Left colon (tissue), 2 donors: ENCODE measurements at regions of chr1 and their contacts with region 1.

Region 1: GRCh38 chr1:25392841-25393240 is 27.8 kb downstream of the RHCE start:
- DNase-seq: peak in 1 of 2 donors; percentile 6
- ATAC-seq: peak; percentile 52

Region 2: GRCh38 chr1:25442178-25442577 is 49.3 kb after region 1 on chr1:
- intact Hi-C with region 1: loop called in 1 of 2 experiments (anchors 10 kb)
- DNase-seq: no peak
- ATAC-seq: no peak

Region 3: GRCh38 chr1:26279456-26280332 is 886.9 kb after region 1 on chr1 and contains the start of gene SH3BGRL3:
- intact Hi-C with region 1: no loop called
- DNase-seq: peak; percentile 89 to 93
- ATAC-seq: peak; percentile 63
- total RNA-seq, gene SH3BGRL3: 401 to 409 TPM